ENCODE measurements at regions of chr7 and their contacts with region 1.

Region 1: DNA sequence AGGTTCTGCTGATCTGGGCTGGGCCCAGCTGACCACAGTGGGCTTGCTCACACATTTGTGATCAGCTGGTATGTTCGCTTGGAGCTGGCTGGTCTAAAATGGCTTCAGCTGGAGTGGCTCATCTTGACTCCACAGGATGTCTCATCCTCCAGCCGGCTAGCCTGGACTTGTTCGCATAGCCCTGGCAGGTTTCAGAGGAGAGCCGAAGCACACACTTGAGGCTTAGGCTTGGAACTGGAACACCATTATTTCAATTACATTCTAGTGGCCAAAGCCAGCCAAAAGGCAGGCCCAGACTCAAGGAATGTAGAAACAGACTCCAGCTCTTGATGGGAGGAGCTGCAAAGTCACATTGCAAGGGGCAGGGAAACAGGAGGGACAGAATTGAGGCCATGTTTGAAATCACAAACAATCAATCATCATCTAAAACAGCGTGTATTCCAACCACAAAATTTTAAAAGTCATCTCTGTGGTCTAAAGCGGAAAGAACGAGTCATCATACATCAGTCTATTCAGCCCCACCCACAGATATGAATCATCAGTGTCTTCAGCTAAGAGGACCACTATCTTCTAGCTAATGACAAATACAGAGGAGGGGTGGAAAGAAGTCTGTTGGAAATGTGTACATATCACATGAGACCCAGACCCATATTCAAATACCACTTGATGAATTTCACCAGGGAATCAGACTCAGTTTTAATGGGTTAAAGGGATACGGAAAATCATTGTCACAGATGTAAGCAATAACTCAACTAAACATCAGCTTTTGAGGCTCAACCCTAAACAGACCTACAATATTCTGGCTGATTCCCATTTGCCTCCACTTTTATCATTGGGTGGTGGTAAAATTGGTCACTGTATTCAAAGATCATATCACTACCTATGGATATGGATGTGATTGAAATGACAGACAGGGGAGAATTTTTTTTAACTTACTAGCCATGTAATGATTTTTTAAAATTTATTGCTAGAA is 139.0 kb upstream of the MKLN1 start:
- DNase-seq: peak; percentile 59
- H3K4me3 Mint-ChIP-seq: peak overlapping the region; percentile 52
- H3K27ac Mint-ChIP-seq: peak overlapping the region; percentile 91
- H3K4me1 Mint-ChIP-seq: peaks cover 59% of the 10 kb centered on the region
- H3K27me3 Mint-ChIP-seq: no peaks in the 10 kb centered on the region

Region 2: GRCh38 chr7:131031099-131031868 is 157.4 kb before region 1 on chr7:
- intact Hi-C with region 1: loop called (anchors 1 kb)
- DNase-seq: no peak
- H3K4me3 Mint-ChIP-seq: peak overlapping the region; percentile 42
- H3K27ac Mint-ChIP-seq: peak overlapping the region; percentile 81
- H3K4me1 Mint-ChIP-seq: peaks cover 79% of the 10 kb centered on the region
- H3K27me3 Mint-ChIP-seq: no peaks in the 10 kb centered on the region

Region 3: GRCh38 chr7:131370523-131370968 is 181.9 kb after region 1 on chr7:
- intact Hi-C with region 1: loop called (anchors 5 kb)
- DNase-seq: peak; percentile 45
- H3K4me3 Mint-ChIP-seq: no peak overlapping the region
- H3K27ac Mint-ChIP-seq: no peak overlapping the region
- H3K4me1 Mint-ChIP-seq: peaks cover 62% of the 10 kb centered on the region
- H3K27me3 Mint-ChIP-seq: peaks cover 5% of the 10 kb centered on the region

Region 4: DNA sequence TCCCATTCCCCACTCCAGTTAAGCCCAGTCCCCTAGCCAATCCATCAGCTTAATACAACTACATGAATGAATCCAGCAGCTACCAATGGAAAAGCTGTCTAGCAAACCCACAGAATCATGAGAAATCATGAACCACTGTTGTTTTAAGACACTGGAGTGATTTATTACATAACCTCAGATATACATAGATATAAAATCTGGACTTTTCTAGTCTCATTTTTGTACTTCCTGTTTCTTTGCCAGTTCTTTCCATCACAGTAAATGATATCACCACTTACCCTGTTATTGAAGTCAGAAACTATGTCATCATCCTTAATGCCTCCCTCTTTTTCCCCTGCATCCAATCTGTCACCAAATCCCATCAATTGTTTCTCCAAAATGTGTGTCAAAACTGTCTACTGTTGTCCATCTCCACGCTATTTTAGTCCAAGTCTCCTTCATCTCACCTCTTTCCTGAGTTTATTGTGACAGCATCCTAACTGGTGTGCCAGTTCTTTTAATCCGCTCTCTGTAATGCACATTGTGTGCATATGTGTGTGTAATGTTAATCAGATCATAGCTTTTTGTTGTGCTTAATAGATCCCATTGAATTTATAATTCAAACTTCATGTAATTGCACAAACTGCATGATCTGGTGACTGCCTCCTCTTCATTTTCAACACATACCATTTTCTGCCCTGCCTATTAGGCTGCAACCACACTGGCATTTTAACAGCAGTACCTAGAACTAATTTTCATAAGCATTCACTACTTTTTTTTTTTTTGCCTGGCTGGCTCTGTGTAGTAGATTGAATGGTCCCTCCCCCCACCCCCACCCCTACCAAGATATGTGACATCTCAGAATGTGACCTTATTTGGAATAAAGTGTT is 195.0 kb after region 1 on chr7:
- intact Hi-C with region 1: loop called (anchors 1 kb)
- DNase-seq: no peak
- H3K4me3 Mint-ChIP-seq: no peak overlapping the region
- H3K27ac Mint-ChIP-seq: no peak overlapping the region
- H3K4me1 Mint-ChIP-seq: peaks cover 23% of the 10 kb centered on the region
- H3K27me3 Mint-ChIP-seq: no peaks in the 10 kb centered on the region

Region 5: DNA sequence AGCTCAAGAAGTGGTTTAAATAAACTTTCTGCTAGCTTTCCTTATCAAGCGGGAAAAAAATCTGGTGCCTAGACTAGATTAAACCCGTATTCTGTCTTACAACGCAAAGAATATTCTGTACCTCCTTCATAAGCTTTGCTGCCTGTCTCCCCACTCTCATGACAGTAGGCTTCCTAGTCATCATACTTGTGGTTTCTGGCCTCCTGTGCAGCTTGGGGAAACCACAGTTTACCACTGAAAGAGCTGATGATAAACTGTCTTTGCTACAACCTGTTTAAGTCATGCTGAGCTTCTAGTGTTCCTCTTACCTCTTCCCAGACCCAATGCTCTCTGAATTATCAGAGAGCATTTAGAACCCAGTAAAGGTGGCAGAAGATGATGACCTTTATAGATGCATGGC is 312.8 kb after region 1 on chr7:
- intact Hi-C with region 1: loop called (anchors 5 kb)
- DNase-seq: peak; percentile 61
- H3K4me3 Mint-ChIP-seq: no peak overlapping the region
- H3K27ac Mint-ChIP-seq: peak overlapping the region; percentile 28
- H3K4me1 Mint-ChIP-seq: peaks cover 49% of the 10 kb centered on the region
- H3K27me3 Mint-ChIP-seq: no peaks in the 10 kb centered on the region